ENCODE measurements at regions of chr5 and their contacts with region 1.

Region 1: GRCh38 chr5:56270568-56271392 is 37.6 kb upstream of the ANKRD55 start:
- DNase-seq: peak; percentile 62
- ATAC-seq: peak; percentile 97
- H3K4me3 ChIP-seq: no peak overlapping the region
- H3K27ac ChIP-seq: no peak overlapping the region
- H3K4me1 ChIP-seq: no peaks in the 10 kb centered on the region
- H3K27me3 ChIP-seq: no peaks in the 10 kb centered on the region
- CTCF ChIP-seq: peak; percentile 89 to 99 (median 99)
- EP300 ChIP-seq: no peak
- POLR2A ChIP-seq: no peak
- RAD21 ChIP-seq: peak; percentile 99

Region 2: GRCh38 chr5:55982957-55983381 is 287.8 kb before region 1 on chr5:
- CTCF ChIA-PET with region 1: interaction called, 6 read pairs
- POLR2A ChIA-PET with region 1: no interaction called
- RAD21 ChIA-PET with region 1: interaction called, 3 read pairs
- SMC1A ChIA-PET with region 1: interaction called, 3 read pairs
- in situ Hi-C with region 1: no loop called
- intact Hi-C with region 1: loop called (anchors 10 kb)
- DNase-seq: no peak
- ATAC-seq: peak; percentile 28
- H3K4me3 ChIP-seq: no peak overlapping the region
- H3K27ac ChIP-seq: no peak overlapping the region
- H3K4me1 ChIP-seq: peaks cover 1% of the 10 kb centered on the region
- H3K27me3 ChIP-seq: no peaks in the 10 kb centered on the region
- CTCF ChIP-seq: peak in 2 of 3 experiments; percentile 14 to 50; a peak in 3 of 6 replicates
- EP300 ChIP-seq: no peak
- POLR2A ChIP-seq: no peak
- RAD21 ChIP-seq: peak; percentile 38

Region 3: GRCh38 chr5:56323505-56323904 is 52.7 kb after region 1 on chr5:
- CTCF ChIA-PET with region 1: interaction called, 13 read pairs
- POLR2A ChIA-PET with region 1: no interaction called
- RAD21 ChIA-PET with region 1: interaction called, 21 read pairs
- SMC1A ChIA-PET with region 1: interaction called, 11 read pairs
- in situ Hi-C with region 1: no loop called
- intact Hi-C with region 1: no loop called
- DNase-seq: no peak
- ATAC-seq: no peak
- H3K4me3 ChIP-seq: no peak overlapping the region
- H3K27ac ChIP-seq: no peak overlapping the region
- H3K4me1 ChIP-seq: peaks cover 13% of the 10 kb centered on the region
- H3K27me3 ChIP-seq: no peaks in the 10 kb centered on the region
- CTCF ChIP-seq: no peak
- EP300 ChIP-seq: no peak
- POLR2A ChIP-seq: no peak
- RAD21 ChIP-seq: no peak

Region 4: DNA sequence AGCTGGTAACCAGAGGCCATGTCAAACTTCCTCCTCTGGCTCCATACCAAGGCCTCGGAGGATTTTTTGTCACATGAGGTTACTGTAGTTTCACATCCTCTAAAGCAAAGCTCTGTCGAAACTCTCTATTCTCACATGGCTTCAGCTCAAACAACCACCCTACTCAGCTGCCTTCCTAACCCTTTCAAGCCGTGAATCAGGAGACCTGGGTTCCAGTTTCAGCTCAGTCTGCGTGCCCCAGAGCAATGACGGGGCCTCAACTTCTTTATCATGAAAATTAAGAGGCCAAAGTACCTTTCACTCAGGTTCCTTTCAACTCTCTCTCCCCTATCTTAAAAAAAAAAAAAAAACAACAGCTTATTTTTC is 399.3 kb after region 1 on chr5:
- CTCF ChIA-PET with region 1: interaction called, 6 read pairs
- POLR2A ChIA-PET with region 1: no interaction called
- RAD21 ChIA-PET with region 1: interaction called, 12 read pairs
- SMC1A ChIA-PET with region 1: interaction called, 10 read pairs
- in situ Hi-C with region 1: no loop called
- intact Hi-C with region 1: no loop called
- DNase-seq: peak; percentile 98
- ATAC-seq: peak; percentile 97
- H3K4me3 ChIP-seq: no peak overlapping the region
- H3K27ac ChIP-seq: no peak overlapping the region
- H3K4me1 ChIP-seq: peaks cover 22% of the 10 kb centered on the region
- H3K27me3 ChIP-seq: no peaks in the 10 kb centered on the region
- CTCF ChIP-seq: no peak
- EP300 ChIP-seq: peak; percentile 92 to 96
- POLR2A ChIP-seq: no peak
- RAD21 ChIP-seq: no peak; the same call in 1 of the 2 replicates

Region 5: GRCh38 chr5:56827049-56827448 is 556.3 kb after region 1 on chr5:
- CTCF ChIA-PET with region 1: interaction called, 18 read pairs
- POLR2A ChIA-PET with region 1: no interaction called
- RAD21 ChIA-PET with region 1: interaction called, 5 read pairs
- SMC1A ChIA-PET with region 1: interaction called, 39 read pairs
- in situ Hi-C with region 1: no loop called
- intact Hi-C with region 1: no loop called
- DNase-seq: no peak
- ATAC-seq: peak; percentile 52
- H3K4me3 ChIP-seq: no peak overlapping the region
- H3K27ac ChIP-seq: no peak overlapping the region
- H3K4me1 ChIP-seq: peaks cover 7% of the 10 kb centered on the region
- H3K27me3 ChIP-seq: no peaks in the 10 kb centered on the region
- CTCF ChIP-seq: peak in 2 of 3 experiments; percentile 27 to 33; a peak in 3 of 6 replicates
- EP300 ChIP-seq: no peak
- POLR2A ChIP-seq: no peak
- RAD21 ChIP-seq: peak; percentile 39; the same call in 1 of the 2 replicates

Region 6: GRCh38 chr5:56873056-56873455 is 602.3 kb after region 1 on chr5:
- CTCF ChIA-PET with region 1: interaction called, 6 read pairs
- POLR2A ChIA-PET with region 1: no interaction called
- RAD21 ChIA-PET with region 1: interaction called, 10 read pairs
- SMC1A ChIA-PET with region 1: interaction called, 3 read pairs
- in situ Hi-C with region 1: no loop called
- intact Hi-C with region 1: no loop called
- DNase-seq: no peak
- ATAC-seq: no peak
- H3K4me3 ChIP-seq: no peak overlapping the region
- H3K27ac ChIP-seq: no peak overlapping the region
- H3K4me1 ChIP-seq: no peaks in the 10 kb centered on the region
- H3K27me3 ChIP-seq: no peaks in the 10 kb centered on the region
- CTCF ChIP-seq: no peak
- EP300 ChIP-seq: no peak
- POLR2A ChIP-seq: no peak
- RAD21 ChIP-seq: no peak

Region 7: DNA sequence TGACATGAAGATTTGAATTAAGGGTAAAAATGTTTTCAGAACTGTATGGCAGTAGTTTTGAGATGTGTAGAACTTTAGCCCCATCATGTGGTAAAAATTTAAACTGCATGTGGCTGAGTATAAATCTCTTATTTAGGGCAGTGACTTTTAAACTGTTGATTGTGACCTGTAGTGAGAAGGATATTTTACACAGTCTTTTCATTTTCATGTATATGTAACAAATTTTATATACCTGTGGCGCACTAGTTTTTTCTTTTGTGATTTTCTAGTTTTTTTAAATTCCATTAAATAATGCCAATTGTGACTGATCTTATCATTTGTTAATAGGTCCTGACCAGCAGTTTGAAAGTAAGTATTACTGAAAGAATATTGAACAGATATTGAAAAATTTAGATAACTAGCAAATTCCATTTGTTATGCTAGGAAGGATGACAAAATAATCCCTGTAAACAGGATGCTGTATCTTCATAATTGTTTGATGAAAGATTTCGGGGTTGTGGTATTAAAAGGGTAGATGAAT is 950.3 kb after region 1 on chr5:
- CTCF ChIA-PET with region 1: interaction called, 5 read pairs
- POLR2A ChIA-PET with region 1: no interaction called
- RAD21 ChIA-PET with region 1: interaction called, 3 read pairs
- SMC1A ChIA-PET with region 1: interaction called, 5 read pairs
- in situ Hi-C with region 1: loop called (anchors 10 kb)
- intact Hi-C with region 1: loop called (anchors 5 kb)
- DNase-seq: peak; percentile 42
- ATAC-seq: peak; percentile 82
- H3K4me3 ChIP-seq: no peak overlapping the region
- H3K27ac ChIP-seq: no peak overlapping the region
- H3K4me1 ChIP-seq: no peaks in the 10 kb centered on the region
- H3K27me3 ChIP-seq: no peaks in the 10 kb centered on the region
- CTCF ChIP-seq: peak; percentile 66 to 75 (median 67)
- EP300 ChIP-seq: no peak
- POLR2A ChIP-seq: no peak
- RAD21 ChIP-seq: peak; percentile 93